ENCODE measurements at regions of chr7 and their contacts with region 1.

Region 1: GRCh38 chr7:100705753-100706671 is at the start of gene POP7:
- DNase-seq: peak; percentile 99
- ATAC-seq: peak; percentile 96
- H3K4me3 Mint-ChIP-seq: peak within 1 kb of the TSS; percentile 96
- H3K27ac Mint-ChIP-seq: peak within 1 kb of the TSS; percentile 96
- H3K4me1 Mint-ChIP-seq: peaks cover 12% of the 10 kb centered on the region
- H3K27me3 Mint-ChIP-seq: no peaks in the 10 kb centered on the region
- total RNA-seq, gene POP7: 46.1 to 59.4 TPM

Region 2: GRCh38 chr7:100632951-100633717 is 72.9 kb before region 1 on chr7:
- CTCF ChIA-PET with region 1: interaction called, 22 read pairs
- POLR2A ChIA-PET with region 1: interaction called, 10 read pairs
- intact Hi-C with region 1: no loop called
- DNase-seq: peak; percentile 80
- ATAC-seq: peak; percentile 75
- H3K4me3 Mint-ChIP-seq: peak overlapping the region; percentile 80
- H3K27ac Mint-ChIP-seq: peak overlapping the region; percentile 92
- H3K4me1 Mint-ChIP-seq: peaks cover 18% of the 10 kb centered on the region
- H3K27me3 Mint-ChIP-seq: no peaks in the 10 kb centered on the region

Region 3: DNA sequence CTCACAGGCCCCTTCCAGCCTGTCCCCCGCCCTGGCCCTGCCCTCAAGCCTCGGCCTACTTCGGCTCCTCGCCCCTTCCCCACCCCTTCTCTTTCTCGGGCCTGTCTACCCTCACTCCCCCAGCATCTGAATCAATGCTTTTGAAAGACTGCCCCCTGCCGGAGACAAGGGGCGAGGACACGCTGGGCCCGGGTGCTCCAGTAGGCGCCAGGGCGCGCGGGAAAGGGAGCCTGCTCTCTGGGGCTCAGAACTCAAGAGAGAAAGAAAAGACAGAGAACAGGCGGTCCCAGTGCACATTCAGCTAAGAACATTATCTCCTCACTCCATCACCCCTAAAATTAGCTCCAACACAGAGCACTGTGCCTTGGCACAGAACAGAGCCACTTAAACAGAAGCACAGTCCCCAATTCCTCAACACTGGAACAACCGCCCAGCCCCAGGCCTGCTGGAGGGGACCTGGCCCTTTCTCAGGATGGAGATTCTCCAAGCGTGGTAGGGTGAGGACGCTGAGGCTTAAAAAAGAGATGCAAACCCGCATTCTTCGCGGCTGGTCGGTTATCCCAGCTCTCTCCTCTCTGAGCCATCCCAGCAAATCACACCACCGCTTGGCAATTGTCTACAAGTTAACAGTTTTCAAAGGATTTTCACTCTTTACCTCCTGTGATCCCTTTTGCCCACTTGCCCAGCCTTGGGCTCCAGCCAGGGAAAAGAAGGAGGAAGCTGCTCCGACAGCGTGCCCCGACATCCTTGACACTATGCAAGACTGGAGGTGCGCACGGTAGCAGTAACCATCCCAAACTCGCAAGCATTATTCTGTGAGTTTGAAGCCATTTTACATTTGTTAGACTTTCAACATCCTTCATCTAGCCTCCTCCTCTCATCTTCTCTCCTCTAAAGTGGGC is 14.1 kb before region 1 on chr7:
- CTCF ChIA-PET with region 1: interaction called, 104 read pairs
- POLR2A ChIA-PET with region 1: interaction called, 5 read pairs
- intact Hi-C with region 1: loop called in 1 of 2 experiments (anchors 1 kb)
- DNase-seq: peak; percentile 92
- ATAC-seq: peak; percentile 78
- H3K4me3 Mint-ChIP-seq: peak overlapping the region; percentile 89
- H3K27ac Mint-ChIP-seq: peak overlapping the region; percentile 88
- H3K4me1 Mint-ChIP-seq: peaks cover 48% of the 10 kb centered on the region
- H3K27me3 Mint-ChIP-seq: no peaks in the 10 kb centered on the region

Region 4: DNA sequence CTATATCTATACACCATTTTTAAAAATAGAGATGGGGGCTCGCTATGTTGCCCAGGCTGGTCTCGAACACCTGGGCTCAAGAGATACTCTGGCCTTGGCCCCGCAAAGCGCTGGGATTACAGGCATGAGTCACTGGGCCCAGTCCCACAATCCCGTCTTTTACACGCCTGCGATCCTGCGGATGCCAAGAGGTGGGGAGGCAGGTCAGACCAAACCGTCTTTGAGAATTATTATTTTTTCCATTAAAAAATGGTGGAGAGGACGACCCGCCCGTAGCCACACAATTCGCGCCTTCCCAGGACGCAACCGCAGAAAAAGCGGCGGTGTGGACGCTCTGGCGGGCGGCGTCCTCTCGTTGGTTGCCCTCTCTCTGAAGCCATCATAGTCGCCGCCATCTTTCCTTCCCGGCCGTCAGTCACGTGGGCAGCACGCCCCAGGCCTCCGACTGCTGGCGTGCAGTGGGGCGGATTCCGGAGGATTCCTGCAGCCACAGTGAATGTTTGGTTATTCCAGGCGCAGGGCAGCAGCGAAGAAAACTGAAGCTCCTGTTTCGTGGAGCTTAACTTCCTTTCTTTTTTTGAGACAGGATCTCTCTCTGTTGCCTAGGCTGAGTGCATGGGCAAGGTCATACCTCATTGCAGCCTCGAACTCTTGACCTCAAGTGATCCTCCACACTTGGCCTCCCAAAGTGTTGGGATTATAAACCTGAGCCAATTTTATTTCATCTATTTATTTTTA is 131.3 kb after region 1 on chr7:
- CTCF ChIA-PET with region 1: interaction called, 5 read pairs
- POLR2A ChIA-PET with region 1: interaction called, 3 read pairs
- intact Hi-C with region 1: loop called in 1 of 2 experiments (anchors 5 kb)
- DNase-seq: peak; percentile 84
- ATAC-seq: peak; percentile 97
- H3K4me3 Mint-ChIP-seq: peak overlapping the region; percentile 64
- H3K27ac Mint-ChIP-seq: peak overlapping the region; percentile 79
- H3K4me1 Mint-ChIP-seq: peaks cover 11% of the 10 kb centered on the region
- H3K27me3 Mint-ChIP-seq: no peaks in the 10 kb centered on the region

Region 5: GRCh38 chr7:101085162-101085987 is 379.4 kb after region 1 on chr7 and contains the start of gene TRIM56:
- CTCF ChIA-PET with region 1: interaction called, 3 read pairs
- POLR2A ChIA-PET with region 1: no interaction called
- intact Hi-C with region 1: loop called in 1 of 2 experiments (anchors 5 kb)
- DNase-seq: peak; percentile 88
- ATAC-seq: peak; percentile 90
- H3K4me3 Mint-ChIP-seq: peak within 1 kb of the TSS; percentile 94
- H3K27ac Mint-ChIP-seq: peak within 1 kb of the TSS; percentile 98
- H3K4me1 Mint-ChIP-seq: peaks cover 26% of the 10 kb centered on the region
- H3K27me3 Mint-ChIP-seq: no peaks in the 10 kb centered on the region
- total RNA-seq, gene TRIM56: 35.3 to 40.8 TPM